Activated CD4-positive, alpha-beta memory T cell treated with anti-CD3 and anti-CD28 coated beads for 36 hours (primary cell): ENCODE measurements at regions of chr3 and their contacts with region 1.

Region 1: GRCh38 chr3:43998836-43999727 is 242.6 kb upstream of the TOPAZ1 start:
- DNase-seq: no peak
- H3K4me3 Mint-ChIP-seq: peak overlapping the region; percentile 21
- H3K27ac Mint-ChIP-seq: no peak overlapping the region
- H3K4me1 Mint-ChIP-seq: peaks cover 39% of the 10 kb centered on the region
- H3K27me3 Mint-ChIP-seq: peaks cover 64% of the 10 kb centered on the region

Region 2: GRCh38 chr3:43894176-43895049 is 104.7 kb before region 1 on chr3:
- CTCF ChIA-PET with region 1: no interaction called
- POLR2A ChIA-PET with region 1: no interaction called
- intact Hi-C with region 1: loop called (anchors 10 kb)
- DNase-seq: peak; percentile 57
- H3K4me3 Mint-ChIP-seq: peak overlapping the region; percentile 64
- H3K27ac Mint-ChIP-seq: no peak overlapping the region
- H3K4me1 Mint-ChIP-seq: peaks cover 11% of the 10 kb centered on the region
- H3K27me3 Mint-ChIP-seq: peaks cover 42% of the 10 kb centered on the region

Region 3: GRCh38 chr3:44114142-44114541 is 115.1 kb after region 1 on chr3:
- CTCF ChIA-PET with region 1: no interaction called
- POLR2A ChIA-PET with region 1: no interaction called
- intact Hi-C with region 1: loop called (anchors 10 kb)
- DNase-seq: peak; percentile 52
- H3K4me3 Mint-ChIP-seq: no peak overlapping the region
- H3K27ac Mint-ChIP-seq: no peak overlapping the region
- H3K4me1 Mint-ChIP-seq: no peaks in the 10 kb centered on the region
- H3K27me3 Mint-ChIP-seq: peaks cover 14% of the 10 kb centered on the region